ENCODE measurements at regions of chr17 and their contacts with region 1.

Region 1: DNA sequence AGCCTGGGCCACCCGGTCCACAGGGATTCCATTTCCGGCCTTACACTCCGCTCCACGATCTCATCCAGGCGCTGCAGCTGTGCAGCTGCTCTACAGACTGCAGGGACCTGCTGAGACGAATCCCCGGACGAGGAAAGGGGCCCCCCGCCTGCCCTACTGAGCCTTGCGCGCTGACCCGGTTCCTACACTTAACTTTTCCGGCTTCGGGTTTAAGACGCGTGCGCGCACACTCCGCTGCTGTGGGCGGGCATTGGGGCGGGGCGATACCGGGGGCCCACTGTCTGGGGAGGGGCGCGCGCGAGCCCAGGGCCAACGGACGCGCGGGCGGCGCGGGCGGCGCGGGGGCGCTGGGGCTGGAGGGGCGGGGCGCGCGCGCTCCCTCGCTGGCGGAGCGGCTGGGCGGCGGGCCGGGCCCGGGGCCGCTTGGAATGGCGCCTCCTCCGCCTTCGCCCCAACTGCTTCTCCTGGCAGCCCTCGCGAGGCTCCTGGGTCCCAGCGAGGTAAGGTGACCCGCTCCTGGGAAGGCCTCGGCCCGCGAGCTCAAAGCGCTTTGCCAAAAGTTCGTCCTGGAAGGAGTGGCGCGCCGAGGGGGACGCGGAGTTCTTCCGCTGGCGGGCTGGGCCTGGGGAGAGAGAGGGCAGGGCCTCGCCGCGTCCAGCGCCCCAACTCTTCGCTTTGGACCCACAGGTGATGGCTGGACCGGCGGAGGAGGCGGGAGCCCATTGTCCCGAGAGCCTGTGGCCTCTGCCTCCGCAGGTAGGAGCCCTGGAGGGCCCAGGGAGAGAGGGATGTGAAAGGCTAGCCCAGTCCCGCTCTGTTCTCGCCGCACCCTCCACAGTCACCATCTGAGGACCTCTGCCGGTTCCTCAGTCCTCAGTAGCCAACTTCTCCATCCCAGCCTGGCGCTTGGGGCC is at the start of gene TP53I13:
- DNase-seq: peak; percentile 85
- H3K4me3 Mint-ChIP-seq: peak within 1 kb of the TSS; percentile 94
- H3K27ac Mint-ChIP-seq: peak within 1 kb of the TSS; percentile 96
- H3K4me1 Mint-ChIP-seq: peaks cover 25% of the 10 kb centered on the region
- H3K27me3 Mint-ChIP-seq: no peaks in the 10 kb centered on the region
- total RNA-seq, gene TP53I13: 78.2 and 84.8 TPM in 2 replicates

Region 2: DNA sequence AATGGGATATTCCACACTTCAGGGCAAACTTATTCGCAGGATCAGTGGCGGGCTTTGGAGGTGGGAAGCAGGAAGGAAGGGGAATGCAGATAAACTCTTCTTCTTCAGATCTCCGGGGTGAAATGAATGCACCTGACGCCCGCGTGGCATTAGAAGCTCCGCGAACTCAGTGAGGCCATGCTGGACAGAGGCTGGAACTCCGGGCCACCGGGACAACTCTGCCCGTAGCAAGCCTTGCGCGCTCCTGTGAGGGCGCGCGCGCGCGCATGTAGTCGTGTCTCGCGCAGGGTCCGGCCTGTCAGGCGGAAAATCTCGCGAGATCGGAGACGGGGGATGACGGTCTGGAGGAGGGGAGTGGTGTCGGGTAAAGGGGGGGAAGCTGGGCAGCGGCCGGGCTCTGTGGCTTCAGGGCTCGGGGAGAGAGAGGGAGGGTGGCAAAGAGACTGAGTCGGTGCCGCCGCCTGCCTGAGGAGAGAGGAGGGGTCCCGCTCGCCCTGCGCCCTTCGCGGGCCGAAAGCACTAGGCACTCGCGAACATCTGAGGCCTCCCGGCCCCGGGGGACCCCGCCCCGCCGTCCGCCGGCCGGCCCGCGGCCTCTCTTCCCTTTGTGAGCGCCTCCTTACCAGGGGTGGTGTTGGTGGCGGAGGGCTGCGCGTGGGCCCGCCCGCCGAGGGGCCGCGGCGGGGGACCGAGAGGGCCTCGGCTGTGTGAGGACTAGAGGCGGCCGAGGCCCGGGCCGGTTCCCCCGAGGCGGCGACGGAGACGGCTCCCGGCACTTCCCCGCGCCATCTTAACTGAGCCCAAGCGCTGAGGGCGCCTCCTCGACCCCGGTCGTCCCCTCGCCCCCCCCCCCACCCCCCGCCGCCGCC is 178.4 kb before region 1 on chr17 and contains the start of gene TAOK1:
- intact Hi-C with region 1: loop called (anchors 5 kb)
- DNase-seq: peak; percentile 97
- H3K4me3 Mint-ChIP-seq: peak within 1 kb of the TSS; percentile 96
- H3K27ac Mint-ChIP-seq: peak within 1 kb of the TSS; percentile 89
- H3K4me1 Mint-ChIP-seq: peaks cover 28% of the 10 kb centered on the region
- H3K27me3 Mint-ChIP-seq: no peaks in the 10 kb centered on the region
- total RNA-seq, gene TAOK1: 41.9 and 47.9 TPM in 2 replicates

Region 3: GRCh38 chr17:29589524-29590410 is 21.2 kb after region 1 on chr17 and contains the start of gene GIT1:
- intact Hi-C with region 1: loop called (anchors 1 kb)
- DNase-seq: peak; percentile 81
- H3K4me3 Mint-ChIP-seq: peak within 1 kb of the TSS; percentile 87
- H3K27ac Mint-ChIP-seq: peak within 1 kb of the TSS; percentile 93
- H3K4me1 Mint-ChIP-seq: peaks cover 52% of the 10 kb centered on the region
- H3K27me3 Mint-ChIP-seq: no peaks in the 10 kb centered on the region
- total RNA-seq, gene GIT1: 67.3 and 72.4 TPM in 2 replicates

Measured in activated T-helper 2 cell treated with anti-CD3 and anti-CD28 coated beads, Interferon-gamma antibody, Interleukin-2, Interleukin-4, amounts not matched to agents 10 μg/mL and 5 μg/mL and 100 μg/mL, durations not matched to agents 14 hours and 24 hours and 36 hours (primary cell).